ENCODE measurements at regions of chr13 and their contacts with region 1.

Region 1: DNA sequence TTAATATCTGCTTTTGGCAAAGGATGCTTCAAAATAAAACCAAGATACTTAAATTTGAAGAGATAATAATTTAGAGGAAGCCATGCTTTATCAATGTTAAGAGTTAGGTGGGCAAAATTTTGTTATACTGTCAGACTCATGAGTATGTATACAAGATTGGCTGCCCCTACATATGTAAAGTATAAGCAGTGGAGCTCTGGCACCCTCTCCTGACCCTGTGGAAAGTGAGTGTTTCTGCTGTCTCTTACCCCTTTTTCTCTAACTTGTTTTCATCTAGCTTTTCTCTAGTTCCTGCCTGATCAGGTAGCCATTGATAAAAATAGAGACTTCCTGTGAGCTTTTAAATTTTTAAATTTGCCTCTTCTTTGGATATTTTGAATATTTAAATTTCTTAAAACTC is 710.9 kb upstream of the SPRY2 start:
- DNase-seq: no peak
- ATAC-seq: no peak
- H3K4me3 ChIP-seq: no peak overlapping the region
- H3K27ac ChIP-seq: no peak overlapping the region
- H3K4me1 ChIP-seq: no peaks in the 10 kb centered on the region
- H3K27me3 ChIP-seq: no peaks in the 10 kb centered on the region
- CTCF ChIP-seq: peak in 1 of 3 experiments; percentile 7; a peak in 1 of 6 replicates
- EP300 ChIP-seq: no peak
- POLR2A ChIP-seq: no peak
- RAD21 ChIP-seq: no peak

Region 2: DNA sequence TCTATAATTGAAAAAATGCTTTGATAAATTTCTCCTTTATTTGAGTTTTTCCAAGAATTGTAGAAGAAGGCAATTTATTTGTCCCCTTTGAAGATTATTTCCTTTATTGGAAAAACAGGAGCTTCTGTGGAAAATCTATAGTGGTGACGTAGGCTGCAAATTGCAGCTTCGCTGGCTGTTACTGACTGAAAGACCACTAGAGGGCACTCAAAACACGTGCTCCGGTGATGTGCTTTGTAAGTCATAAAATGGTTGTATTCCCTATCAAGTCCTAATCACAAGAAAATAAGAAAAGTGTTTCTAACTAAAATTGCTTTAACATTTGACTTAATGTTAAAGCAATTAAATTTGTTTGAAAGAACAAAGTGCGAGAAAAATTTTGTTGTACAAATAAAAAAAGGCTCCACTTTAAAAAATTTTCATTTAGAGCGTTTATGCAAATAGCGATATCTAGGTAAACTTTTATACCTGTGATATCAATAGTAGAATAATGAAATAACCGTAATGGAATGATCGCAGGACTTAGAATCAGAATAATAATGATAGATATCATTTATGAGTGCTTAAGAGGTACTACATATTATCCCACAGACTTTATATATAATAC is 72.7 kb before region 1 on chr13:
- CTCF ChIA-PET with region 1: no interaction called
- POLR2A ChIA-PET with region 1: no interaction called
- RAD21 ChIA-PET with region 1: interaction called, 5 read pairs
- SMC1A ChIA-PET with region 1: interaction called, 16 read pairs
- in situ Hi-C with region 1: no loop called
- intact Hi-C with region 1: no loop called
- DNase-seq: peak; percentile 11
- ATAC-seq: peak; percentile 85
- H3K4me3 ChIP-seq: no peak overlapping the region
- H3K27ac ChIP-seq: no peak overlapping the region
- H3K4me1 ChIP-seq: no peaks in the 10 kb centered on the region
- H3K27me3 ChIP-seq: no peaks in the 10 kb centered on the region
- CTCF ChIP-seq: peak; percentile 80 to 85 (median 83)
- EP300 ChIP-seq: no peak
- POLR2A ChIP-seq: no peak
- RAD21 ChIP-seq: peak; percentile 68